Sciatic nerve (tissue), 2 donors: ENCODE measurements at regions of chr6 and their contacts with region 1.

Region 1: GRCh38 chr6:33585403-33586107 is 5.5 kb upstream of the BAK1 start:
- DNase-seq: peak; percentile 89
- ATAC-seq: peak; percentile 64

Region 2: GRCh38 chr6:33696548-33697518 is 111.3 kb after region 1 on chr6:
- intact Hi-C with region 1: loop called (anchors 5 kb)
- DNase-seq: no peak
- ATAC-seq: peak; percentile 29